HEK293 (cell line): ENCODE measurements at regions of chr2 and their contacts with region 1.

Region 1: DNA sequence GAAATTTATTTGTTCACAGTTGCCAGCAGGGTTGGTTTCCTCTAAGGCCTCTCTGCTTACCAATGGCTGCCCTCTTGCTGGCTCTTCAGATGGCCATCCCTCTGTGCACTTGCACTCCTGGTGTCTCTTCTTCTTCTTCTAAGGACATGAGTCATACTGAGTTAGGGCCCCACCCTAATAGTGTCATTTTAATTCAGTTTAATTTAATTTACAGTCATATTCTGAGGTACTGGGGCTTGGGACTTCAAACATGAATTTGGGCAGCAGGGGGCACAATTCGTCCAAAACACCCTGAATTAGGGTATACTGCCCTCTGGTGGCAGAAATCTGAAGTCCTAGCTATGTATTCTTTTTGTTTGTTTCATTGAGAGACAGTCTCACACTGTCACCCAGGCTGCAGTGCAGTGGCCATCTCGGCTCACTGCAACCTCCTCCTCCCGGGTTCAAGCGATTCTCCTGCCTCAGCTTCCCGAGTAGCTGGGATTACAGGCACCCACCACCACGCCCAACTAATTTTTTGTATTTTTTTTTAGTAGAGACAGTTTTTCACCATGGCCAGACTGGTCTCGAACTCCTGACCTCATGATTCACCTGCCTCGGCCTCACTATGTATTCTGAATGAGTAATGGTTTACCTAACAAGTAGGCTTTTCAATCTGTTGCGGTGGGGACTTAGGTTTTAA is 19.8 kb downstream of the SLC4A1AP start:
- H3K4me3 ChIP-seq: no peak overlapping the region
- H3K27ac ChIP-seq: no peak overlapping the region
- H3K4me1 ChIP-seq: no peaks in the 10 kb centered on the region
- CTCF ChIP-seq: peak; percentile 95

Region 2: GRCh38 chr2:27628767-27629709 is 54.5 kb before region 1 on chr2 and contains the starts of genes CCDC121 and GPN1:
- CTCF ChIA-PET with region 1: interaction called, 10 read pairs
- POLR2A ChIA-PET with region 1: interaction called, 4 read pairs
- H3K4me3 ChIP-seq: peak within 1 kb of the TSS; percentile 55
- H3K27ac ChIP-seq: peak within 1 kb of the TSS; percentile 42; the same call in 1 of the 2 replicates
- H3K4me1 ChIP-seq: 0 out of 2 replicates have a peak, but pooled peaks cover 2% of the 10 kb centered on the region
- CTCF ChIP-seq: no peak; the same call in 1 of the 2 replicates

Region 3: GRCh38 chr2:27663463-27664249 is 19.9 kb before region 1 on chr2 and contains the starts of genes SLC4A1AP and SUPT7L:
- CTCF ChIA-PET with region 1: interaction called, 61 read pairs
- POLR2A ChIA-PET with region 1: interaction called, 5 read pairs
- H3K4me3 ChIP-seq: peak within 1 kb of the TSS; percentile 78
- H3K27ac ChIP-seq: peak within 1 kb of the TSS; percentile 72
- H3K4me1 ChIP-seq: peaks cover 7% of the 10 kb centered on the region; the same call in 1 of the 2 replicates
- CTCF ChIP-seq: peak; percentile 70; the same call in 1 of the 2 replicates

Region 4: DNA sequence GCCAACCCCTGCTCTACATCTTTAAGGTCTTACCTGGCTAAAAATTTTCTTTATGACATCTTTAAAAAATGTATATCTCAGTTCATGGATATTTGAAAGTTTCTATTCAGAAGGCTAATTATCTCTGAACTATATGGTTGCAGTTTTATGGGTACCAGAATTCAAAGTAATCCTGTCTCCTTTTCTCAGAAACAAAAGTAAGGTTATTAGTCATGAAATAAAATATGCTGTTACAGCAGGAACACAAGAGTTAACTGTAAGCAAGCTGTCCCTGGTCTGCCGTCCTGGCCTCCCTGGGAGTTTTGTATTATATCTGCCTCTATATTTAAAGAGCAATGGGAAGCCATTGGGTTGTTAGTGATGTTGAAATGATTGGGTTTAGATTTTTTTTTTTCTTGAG is 14.1 kb after region 1 on chr2:
- CTCF ChIA-PET with region 1: interaction called, 66 read pairs
- POLR2A ChIA-PET with region 1: no interaction called
- H3K4me3 ChIP-seq: no peak overlapping the region
- H3K27ac ChIP-seq: no peak overlapping the region
- H3K4me1 ChIP-seq: no peaks in the 10 kb centered on the region
- CTCF ChIP-seq: no peak

Region 5: DNA sequence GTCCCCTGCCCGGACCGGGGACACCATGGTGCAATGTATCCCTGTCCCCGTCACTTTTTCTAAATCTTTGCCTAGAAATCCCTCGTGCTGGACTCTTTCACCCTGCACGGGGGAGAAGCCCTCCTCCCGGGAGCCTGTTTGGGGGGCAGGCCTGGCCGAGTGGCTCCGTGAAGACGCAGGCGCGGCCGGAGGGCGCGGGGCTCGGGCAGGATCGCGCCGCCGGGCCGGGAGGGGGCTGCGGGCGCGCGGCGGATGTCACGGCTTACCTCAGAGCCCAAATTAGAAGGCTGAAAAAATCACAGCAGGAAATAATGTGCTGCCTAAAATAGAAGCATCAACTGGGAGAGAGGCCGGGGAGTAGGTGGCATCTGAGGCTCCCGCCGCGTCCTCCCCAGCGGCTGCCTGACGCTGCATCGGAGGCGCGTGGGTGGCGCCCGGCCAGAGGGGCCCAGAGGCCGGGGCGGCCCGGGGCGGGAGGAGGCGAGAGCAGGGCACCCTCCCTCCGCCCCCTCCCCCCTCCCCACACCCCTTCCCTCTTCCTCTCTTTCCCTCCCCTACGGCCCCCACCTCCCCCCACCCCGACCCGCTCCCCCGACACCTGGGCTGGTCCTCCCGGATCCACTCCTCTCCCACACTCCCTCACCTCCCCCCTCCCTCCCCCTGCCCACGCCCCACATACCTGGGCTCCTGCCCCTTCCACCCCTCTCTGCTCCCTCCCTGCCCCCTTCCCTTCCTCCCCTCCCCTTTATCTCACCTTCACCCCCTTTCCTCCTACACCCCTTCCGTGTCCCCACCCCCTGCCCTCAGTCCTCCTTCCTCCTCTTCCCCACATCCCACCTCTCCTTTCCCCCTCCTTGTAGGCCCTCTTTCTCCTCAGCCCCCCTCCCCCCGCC is 32.0 kb after region 1 on chr2:
- CTCF ChIA-PET with region 1: interaction called, 14 read pairs
- POLR2A ChIA-PET with region 1: no interaction called
- H3K4me3 ChIP-seq: peak overlapping the region; percentile 29
- H3K27ac ChIP-seq: peak overlapping the region; percentile 67; the same call in 1 of the 2 replicates
- H3K4me1 ChIP-seq: peaks cover 4% of the 10 kb centered on the region; the same call in 1 of the 2 replicates
- CTCF ChIP-seq: no peak